PC-3 (cell line): ENCODE measurements at regions of chr2 and their contacts with region 1.

Region 1: DNA sequence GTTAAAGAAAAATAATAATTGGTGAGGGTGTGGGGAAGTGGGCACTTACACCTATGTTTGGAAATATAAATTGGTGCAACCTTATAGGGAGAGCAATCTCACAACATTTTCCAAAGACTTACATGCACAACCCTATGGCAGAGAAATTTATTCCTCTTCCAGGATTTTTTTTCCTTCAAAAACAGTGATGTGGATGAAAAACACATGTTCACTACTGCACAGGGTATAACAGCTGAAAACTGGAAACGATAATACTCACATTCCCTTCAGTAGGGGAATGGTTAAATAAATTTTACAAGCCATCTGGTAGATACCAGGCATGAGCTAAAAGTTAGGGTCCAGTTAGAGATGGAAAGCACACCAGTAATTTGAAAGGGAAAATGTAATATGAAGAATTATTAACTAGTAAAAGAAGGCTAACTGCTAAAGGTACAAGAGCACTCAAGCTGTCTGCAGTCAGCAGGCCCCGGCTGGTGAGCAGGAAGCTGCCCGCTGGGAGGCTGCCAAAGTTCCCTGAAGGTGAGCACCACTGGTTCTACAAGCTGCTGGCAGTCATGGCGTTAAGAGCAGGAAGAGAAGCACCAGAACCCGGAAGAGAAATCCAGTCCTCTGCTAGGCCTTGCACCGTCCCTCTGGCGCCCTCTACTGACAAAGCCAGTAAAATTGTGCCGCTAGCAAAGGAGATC is 28.4 kb upstream of the CASP8 start:
- DNase-seq: peak; percentile 97
- ATAC-seq: peak; percentile 32
- H3K4me3 ChIP-seq: no peak overlapping the region
- H3K27ac ChIP-seq: peak overlapping the region; percentile 32
- H3K4me1 ChIP-seq: peaks cover 39% of the 10 kb centered on the region
- H3K27me3 ChIP-seq: no peaks in the 10 kb centered on the region
- CTCF ChIP-seq: peak; percentile 94

Region 2: DNA sequence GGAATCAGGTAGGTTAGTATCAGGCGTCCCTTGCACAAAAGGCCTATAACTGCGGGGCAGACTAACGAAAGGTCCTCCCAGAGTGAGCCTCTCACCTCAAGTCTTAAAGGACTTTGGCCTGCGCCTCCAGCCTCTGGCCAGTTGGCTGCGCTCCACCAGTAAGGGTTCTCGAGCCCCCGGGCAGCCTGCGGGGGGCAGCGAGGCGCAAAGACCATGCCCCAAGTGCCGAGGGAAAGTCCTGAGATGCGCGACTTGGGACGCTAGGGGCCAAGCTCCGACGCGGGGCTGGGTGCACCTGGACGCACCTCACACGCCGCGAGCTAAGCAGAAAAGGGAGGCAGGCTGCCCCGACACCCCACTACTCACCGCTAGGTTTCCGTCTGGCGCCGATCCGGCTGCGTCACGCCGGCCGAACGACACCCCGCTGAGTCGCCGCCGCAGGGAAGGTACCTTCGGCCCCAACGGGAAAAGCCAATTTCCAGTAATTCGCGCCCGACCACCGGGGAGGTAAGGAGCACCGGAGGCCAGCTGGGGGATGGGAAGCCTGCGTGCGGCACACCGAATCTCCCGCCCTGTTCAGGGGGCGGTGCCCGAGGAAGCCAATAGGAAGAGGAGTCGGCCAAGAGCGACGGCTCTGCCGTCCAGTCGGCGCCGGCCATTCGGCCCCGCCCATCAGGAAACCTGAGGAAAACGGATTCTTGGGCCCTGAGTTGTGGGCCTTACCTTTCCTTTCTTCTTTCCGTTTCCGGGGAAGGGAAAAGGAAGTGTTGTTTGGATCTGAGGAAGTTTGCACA is 268.6 kb before region 1 on chr2 and contains the start of gene ORC2:
- CTCF ChIA-PET with region 1: no interaction called
- POLR2A ChIA-PET with region 1: no interaction called
- intact Hi-C with region 1: loop called (anchors 5 kb)
- DNase-seq: peak; percentile 99
- ATAC-seq: peak; percentile 93
- H3K4me3 ChIP-seq: peak within 1 kb of the TSS; percentile 81
- H3K27ac ChIP-seq: peak within 1 kb of the TSS; percentile 58
- H3K4me1 ChIP-seq: peaks cover 55% of the 10 kb centered on the region
- H3K27me3 ChIP-seq: no peaks in the 10 kb centered on the region
- CTCF ChIP-seq: peak; percentile 68
- total RNA-seq, gene ORC2: 17.7 and 25.9 TPM in 2 replicates

Region 3: GRCh38 chr2:201118121-201118960 is 113.6 kb before region 1 on chr2:
- CTCF ChIA-PET with region 1: no interaction called
- POLR2A ChIA-PET with region 1: no interaction called
- intact Hi-C with region 1: loop called (anchors 5 kb)
- DNase-seq: peak; percentile 87
- ATAC-seq: peak; percentile 40
- H3K4me3 ChIP-seq: peak overlapping the region; percentile 75
- H3K27ac ChIP-seq: peak overlapping the region; percentile 96
- H3K4me1 ChIP-seq: peaks cover 17% of the 10 kb centered on the region
- H3K27me3 ChIP-seq: no peaks in the 10 kb centered on the region
- CTCF ChIP-seq: peak; percentile 70

Region 4: DNA sequence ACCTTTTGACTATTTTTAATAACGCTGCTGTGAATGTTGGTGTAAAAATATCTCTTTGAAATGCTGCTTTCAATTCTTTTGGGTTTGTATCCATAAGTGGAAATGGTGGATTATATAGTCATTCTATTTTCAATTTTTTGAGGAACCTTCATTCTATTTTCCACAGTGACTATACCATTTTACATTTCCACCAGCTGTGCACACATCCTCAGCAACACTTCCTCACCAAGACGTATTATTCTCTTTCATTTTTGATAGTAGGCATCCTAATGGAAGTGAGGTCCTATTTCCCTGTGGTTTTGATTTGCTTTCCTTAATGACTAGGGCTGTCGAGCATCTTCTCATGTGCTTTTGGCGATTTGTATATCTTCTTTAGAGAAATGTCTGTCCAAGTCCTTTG is 34.1 kb before region 1 on chr2:
- CTCF ChIA-PET with region 1: no interaction called
- POLR2A ChIA-PET with region 1: no interaction called
- intact Hi-C with region 1: no loop called
- DNase-seq: no peak
- ATAC-seq: no peak
- H3K4me3 ChIP-seq: no peak overlapping the region
- H3K27ac ChIP-seq: no peak overlapping the region
- H3K4me1 ChIP-seq: no peaks in the 10 kb centered on the region
- H3K27me3 ChIP-seq: no peaks in the 10 kb centered on the region
- CTCF ChIP-seq: no peak

Region 5: GRCh38 chr2:201208563-201209252 is 23.2 kb before region 1 on chr2:
- CTCF ChIA-PET with region 1: no interaction called
- POLR2A ChIA-PET with region 1: no interaction called
- intact Hi-C with region 1: no loop called
- DNase-seq: no peak
- ATAC-seq: no peak
- H3K4me3 ChIP-seq: no peak overlapping the region
- H3K27ac ChIP-seq: no peak overlapping the region
- H3K4me1 ChIP-seq: no peaks in the 10 kb centered on the region
- H3K27me3 ChIP-seq: no peaks in the 10 kb centered on the region
- CTCF ChIP-seq: no peak

Region 6: DNA sequence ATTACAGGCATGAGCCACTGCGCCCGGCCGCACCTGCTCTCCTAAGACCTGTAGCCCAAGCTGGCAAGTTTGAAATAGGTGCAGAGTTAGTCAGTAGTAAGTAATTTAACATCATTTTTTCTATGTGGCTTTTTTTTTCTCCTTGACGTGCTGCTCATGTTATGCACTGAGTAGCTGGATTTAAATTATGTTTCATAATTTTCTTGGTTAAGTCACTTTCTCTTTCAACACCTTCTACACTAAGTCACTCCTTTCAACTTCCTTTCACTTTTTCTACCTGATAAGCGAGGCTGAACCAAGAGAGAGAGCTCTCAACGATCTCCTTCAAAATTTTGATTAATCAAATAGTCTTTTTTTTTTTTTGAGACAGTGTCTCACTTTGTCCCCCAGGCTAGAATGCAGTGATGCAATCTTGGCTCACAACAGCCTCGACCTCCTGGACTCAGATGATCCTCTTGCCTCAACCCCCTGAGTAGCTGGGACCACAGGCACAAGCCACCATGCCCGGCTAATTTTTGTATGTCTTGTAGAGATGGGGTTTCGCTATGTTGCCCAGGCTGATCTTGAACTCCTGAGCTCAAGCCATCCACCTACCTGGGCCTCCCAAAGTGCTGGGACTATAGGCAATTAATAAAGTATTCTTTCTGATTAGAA is 41.5 kb after region 1 on chr2:
- CTCF ChIA-PET with region 1: no interaction called
- POLR2A ChIA-PET with region 1: interaction called, 13 read pairs
- intact Hi-C with region 1: no loop called
- DNase-seq: no peak
- ATAC-seq: no peak
- H3K4me3 ChIP-seq: no peak overlapping the region
- H3K27ac ChIP-seq: no peak overlapping the region
- H3K4me1 ChIP-seq: no peaks in the 10 kb centered on the region
- H3K27me3 ChIP-seq: no peaks in the 10 kb centered on the region
- CTCF ChIP-seq: no peak

Region 7: DNA sequence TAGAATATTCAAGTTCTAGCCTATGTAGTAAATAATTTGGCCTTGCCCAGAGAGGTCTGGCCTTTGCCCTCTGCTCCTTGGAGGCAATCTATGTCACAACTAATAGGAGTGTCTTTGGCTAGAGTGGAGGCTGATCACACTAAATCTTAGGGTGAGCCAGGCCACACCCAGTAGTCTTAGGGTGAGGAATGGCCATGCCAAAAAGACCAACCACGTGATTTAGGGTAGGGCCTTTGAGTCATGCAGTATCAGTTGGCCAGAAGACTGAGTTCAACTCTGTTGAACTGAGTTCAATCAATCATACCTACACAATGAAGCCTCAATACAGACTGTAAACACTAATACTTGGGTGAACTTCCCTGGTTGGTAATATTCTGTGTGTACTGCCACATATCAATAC is 151.2 kb after region 1 on chr2:
- CTCF ChIA-PET with region 1: no interaction called
- POLR2A ChIA-PET with region 1: no interaction called
- intact Hi-C with region 1: no loop called
- DNase-seq: peak; percentile 8
- ATAC-seq: peak; percentile 60
- H3K4me3 ChIP-seq: no peak overlapping the region
- H3K27ac ChIP-seq: no peak overlapping the region
- H3K4me1 ChIP-seq: no peaks in the 10 kb centered on the region
- H3K27me3 ChIP-seq: no peaks in the 10 kb centered on the region
- CTCF ChIP-seq: no peak

Region 8: GRCh38 chr2:201403880-201404279 is 172.0 kb after region 1 on chr2:
- CTCF ChIA-PET with region 1: no interaction called
- POLR2A ChIA-PET with region 1: no interaction called
- intact Hi-C with region 1: no loop called
- DNase-seq: no peak
- ATAC-seq: no peak
- H3K4me3 ChIP-seq: no peak overlapping the region
- H3K27ac ChIP-seq: no peak overlapping the region
- H3K4me1 ChIP-seq: peaks cover 8% of the 10 kb centered on the region
- H3K27me3 ChIP-seq: no peaks in the 10 kb centered on the region
- CTCF ChIP-seq: no peak

Region 9: DNA sequence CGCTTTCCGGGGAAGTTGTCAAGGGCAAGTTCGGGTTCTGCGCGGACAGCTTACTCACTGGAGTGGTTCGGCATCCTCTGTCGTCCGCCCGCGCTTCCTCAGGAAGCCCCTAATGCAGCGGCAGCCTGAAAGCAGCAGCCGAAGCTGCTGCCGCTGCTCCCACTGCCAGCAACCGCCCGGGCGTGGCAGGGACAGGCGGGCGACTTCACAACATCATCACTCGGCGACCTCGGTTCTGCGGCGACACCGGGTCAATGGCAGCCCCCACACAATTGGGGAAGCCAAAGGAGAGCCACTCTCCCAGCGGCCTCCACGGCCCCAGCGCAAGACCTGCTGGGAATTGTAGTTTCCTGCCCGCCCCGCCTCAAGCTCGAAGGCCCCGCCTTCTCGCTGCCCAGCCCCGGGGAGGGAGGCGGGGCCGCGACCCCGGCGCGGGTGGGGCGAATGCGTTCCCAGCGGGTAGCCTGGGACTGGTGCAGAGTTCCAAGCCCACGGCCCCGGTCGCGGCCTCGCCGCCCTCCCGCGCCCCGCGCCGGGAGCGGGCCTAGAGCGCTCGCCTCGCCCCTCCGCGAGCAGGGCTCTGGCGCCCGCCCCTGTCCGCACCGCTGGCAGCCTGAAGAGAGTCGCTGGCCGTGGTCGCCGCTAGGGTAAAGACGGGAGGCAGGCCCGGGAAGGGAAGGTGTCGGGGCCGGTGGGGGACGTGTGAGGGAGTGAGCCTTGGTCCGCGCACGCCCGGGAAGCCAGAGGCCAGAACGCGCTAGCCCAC is 219.6 kb after region 1 on chr2 and contains the starts of genes STRADB and TRAK2:
- CTCF ChIA-PET with region 1: no interaction called
- POLR2A ChIA-PET with region 1: no interaction called
- intact Hi-C with region 1: loop called (anchors 1 kb)
- DNase-seq: peak; percentile 95
- ATAC-seq: peak; percentile 88
- H3K4me3 ChIP-seq: peak within 1 kb of the TSS; percentile 88
- H3K27ac ChIP-seq: peak within 1 kb of the TSS; percentile 21
- H3K4me1 ChIP-seq: peaks cover 23% of the 10 kb centered on the region
- H3K27me3 ChIP-seq: no peaks in the 10 kb centered on the region
- CTCF ChIP-seq: 0 out of 2 replicates have a peak, but pooled peaks have one; percentile 16
- total RNA-seq, gene STRADB: 27.8 and 28.9 TPM in 2 replicates
- total RNA-seq, gene TRAK2: 9.4 and 10.1 TPM in 2 replicates